Caco-2 (cell line): ENCODE measurements at regions of chr15 and their contacts with region 1.

Region 1: GRCh38 chr15:29925227-29926082 is 103.2 kb upstream of the TJP1 start:
- DNase-seq: peak; percentile 93 to 94
- H3K4me3 ChIP-seq: no peak overlapping the region
- H3K4me3 Mint-ChIP-seq: peak overlapping the region; percentile 68
- H3K27ac Mint-ChIP-seq: peak overlapping the region; percentile 87
- H3K4me1 ChIP-seq: peaks cover 57% of the 10 kb centered on the region
- H3K4me1 Mint-ChIP-seq: peaks cover 58% of the 10 kb centered on the region
- H3K27me3 ChIP-seq: no peaks in the 10 kb centered on the region
- H3K27me3 Mint-ChIP-seq: no peaks in the 10 kb centered on the region
- CTCF ChIP-seq: peak; percentile 86 to 95

Region 2: DNA sequence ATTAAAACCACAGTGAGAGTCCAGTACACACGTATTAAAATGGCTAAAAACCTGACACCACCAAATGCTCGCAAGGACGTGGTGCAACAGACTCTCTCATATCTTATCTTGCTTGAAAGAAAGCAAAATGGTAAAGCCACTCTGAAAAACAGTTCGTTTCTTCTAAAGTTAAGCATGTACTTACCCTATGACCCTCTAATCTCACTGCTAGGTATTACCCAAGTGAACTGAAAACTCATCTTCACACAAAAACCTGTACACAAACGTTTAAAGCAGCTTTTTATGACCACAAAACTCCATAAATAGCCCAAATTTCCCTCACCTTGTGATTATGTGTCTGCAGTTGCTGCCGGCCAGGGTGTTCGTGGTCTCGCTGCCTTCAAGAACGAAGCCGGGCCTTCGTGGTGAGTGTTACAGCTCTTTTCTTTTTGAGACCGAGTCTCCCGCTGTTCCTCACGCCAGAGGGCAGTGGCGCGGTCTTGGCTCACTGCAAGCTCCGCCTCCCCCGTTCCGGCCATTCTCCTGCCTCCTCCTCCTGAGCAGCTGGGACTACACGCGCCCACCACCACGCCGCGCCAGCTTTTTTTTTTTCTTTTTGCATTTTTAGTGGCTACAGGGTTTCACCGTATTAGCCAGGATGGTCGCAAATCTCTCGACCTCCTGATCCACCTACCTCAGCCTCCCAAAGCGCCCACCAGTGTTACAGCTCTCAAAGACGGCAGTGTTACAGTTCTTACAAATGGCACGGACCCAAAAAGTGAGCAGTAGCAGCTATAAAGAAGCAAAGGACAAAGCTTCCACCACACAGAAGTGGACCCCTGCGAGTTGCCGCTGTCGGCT is 268.6 kb before region 1 on chr15:
- CTCF ChIA-PET with region 1: interaction called, 12 read pairs
- POLR2A ChIA-PET with region 1: no interaction called
- intact Hi-C with region 1: no loop called
- DNase-seq: peak; percentile 78 to 80
- H3K4me3 ChIP-seq: peak overlapping the region; percentile 38
- H3K4me3 Mint-ChIP-seq: peak overlapping the region; percentile 76
- H3K27ac Mint-ChIP-seq: no peak overlapping the region
- H3K4me1 ChIP-seq: no peaks in the 10 kb centered on the region
- H3K4me1 Mint-ChIP-seq: no peaks in the 10 kb centered on the region
- H3K27me3 ChIP-seq: no peaks in the 10 kb centered on the region
- H3K27me3 Mint-ChIP-seq: peaks cover 3% of the 10 kb centered on the region
- CTCF ChIP-seq: peak; percentile 12 to 47

Region 3: DNA sequence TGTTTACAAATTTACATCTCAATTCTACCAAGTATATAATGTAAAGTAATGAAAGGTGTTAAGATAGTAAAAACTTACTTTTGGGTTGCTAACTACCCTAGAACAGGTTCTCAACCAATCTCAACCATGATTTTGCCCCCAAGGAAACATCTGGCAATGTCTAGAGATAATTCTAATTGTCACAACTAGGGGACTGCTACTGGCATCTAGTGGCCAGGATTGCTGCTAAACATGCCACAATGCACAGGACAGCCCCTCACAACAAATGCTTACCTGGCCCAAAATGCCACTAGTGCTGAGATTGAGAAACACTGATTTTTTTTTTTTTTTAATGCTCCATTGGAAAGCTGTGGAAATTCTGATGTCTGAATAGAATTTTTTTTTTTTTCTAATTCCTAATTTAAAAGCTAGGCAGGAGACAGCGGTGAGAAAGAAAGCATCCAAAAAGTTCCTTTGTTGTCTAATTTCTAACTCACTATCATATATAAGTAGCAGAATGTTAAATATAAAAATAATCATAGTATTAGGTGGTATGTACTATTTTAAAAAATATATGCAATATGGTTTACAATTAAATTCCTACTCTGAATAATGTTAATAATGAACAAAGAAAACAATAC is 184.7 kb before region 1 on chr15:
- CTCF ChIA-PET with region 1: interaction called, 17 read pairs
- POLR2A ChIA-PET with region 1: interaction called, 10 read pairs
- intact Hi-C with region 1: loop called (anchors 1 kb)
- DNase-seq: peak; percentile 42 to 44
- H3K4me3 ChIP-seq: no peak overlapping the region
- H3K4me3 Mint-ChIP-seq: no peak overlapping the region
- H3K27ac Mint-ChIP-seq: no peak overlapping the region
- H3K4me1 ChIP-seq: peaks cover 30% of the 10 kb centered on the region
- H3K4me1 Mint-ChIP-seq: peaks cover 23% of the 10 kb centered on the region
- H3K27me3 ChIP-seq: no peaks in the 10 kb centered on the region
- H3K27me3 Mint-ChIP-seq: no peaks in the 10 kb centered on the region
- CTCF ChIP-seq: peak in 1 of 2 experiments; percentile 60

Region 4: DNA sequence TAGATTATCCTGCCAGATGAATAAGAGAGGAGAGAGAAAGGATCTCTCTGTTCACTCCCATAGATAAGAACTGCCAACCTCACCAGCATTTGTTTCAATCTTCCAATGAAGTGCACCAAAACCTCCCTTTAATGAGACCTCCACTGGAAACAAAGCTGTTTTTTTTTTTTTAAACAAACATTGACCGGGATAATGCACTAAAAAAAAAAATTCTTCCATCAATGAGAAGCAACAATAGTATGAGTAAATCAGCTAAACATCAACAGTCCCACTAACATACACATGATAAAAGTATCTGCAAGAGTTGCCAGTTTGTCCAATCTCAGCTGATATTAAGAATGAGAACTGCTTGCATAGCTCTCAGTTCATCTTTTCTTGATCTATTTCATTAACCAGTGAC is 123.0 kb before region 1 on chr15:
- CTCF ChIA-PET with region 1: interaction called, 15 read pairs
- POLR2A ChIA-PET with region 1: no interaction called
- intact Hi-C with region 1: no loop called
- DNase-seq: no peak
- H3K4me3 ChIP-seq: no peak overlapping the region
- H3K4me3 Mint-ChIP-seq: no peak overlapping the region
- H3K27ac Mint-ChIP-seq: peak overlapping the region; percentile 51
- H3K4me1 ChIP-seq: peaks cover 45% of the 10 kb centered on the region
- H3K4me1 Mint-ChIP-seq: peaks cover 53% of the 10 kb centered on the region
- H3K27me3 ChIP-seq: no peaks in the 10 kb centered on the region
- H3K27me3 Mint-ChIP-seq: no peaks in the 10 kb centered on the region
- CTCF ChIP-seq: no peak

Region 5: DNA sequence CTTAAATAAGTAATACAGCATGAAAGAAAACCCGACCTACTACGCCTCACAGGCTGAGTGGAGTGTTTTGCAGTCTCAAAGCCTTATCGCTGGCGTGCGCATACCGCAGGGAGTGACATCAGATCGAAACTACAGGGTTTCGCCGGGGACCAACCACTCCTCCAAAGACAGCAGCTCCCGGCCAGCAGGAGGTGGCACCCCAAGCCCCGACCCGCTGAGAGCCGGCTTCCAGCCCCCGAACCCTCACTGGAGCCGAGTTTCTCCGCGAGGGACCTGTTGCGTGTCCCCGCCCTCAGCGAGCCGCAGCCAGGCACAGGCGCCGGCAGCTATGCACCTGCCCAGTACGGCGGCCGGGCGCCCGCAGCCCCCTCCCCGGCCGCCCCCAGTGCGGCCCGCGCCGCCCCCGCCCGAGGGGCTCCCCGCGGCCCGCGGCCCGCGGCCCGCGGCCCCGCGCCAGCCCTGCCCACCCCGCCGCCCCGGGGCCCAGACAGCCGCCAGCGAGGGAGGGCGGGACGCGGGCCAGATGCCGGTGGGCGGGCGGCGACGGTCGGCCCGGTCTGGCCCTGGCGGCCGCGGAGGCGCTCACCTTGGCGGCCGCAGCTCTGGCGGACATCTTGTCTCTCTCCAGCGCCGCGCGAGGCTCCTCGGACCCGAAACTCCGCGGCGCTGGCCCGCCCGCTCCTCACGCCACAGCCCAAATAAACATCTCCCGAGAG is 103.9 kb before region 1 on chr15:
- CTCF ChIA-PET with region 1: interaction called, 85 read pairs
- POLR2A ChIA-PET with region 1: interaction called, 133 read pairs
- intact Hi-C with region 1: loop called (anchors 1 kb)
- DNase-seq: peak; percentile 96 to 97
- H3K4me3 ChIP-seq: peak overlapping the region; percentile 80
- H3K4me3 Mint-ChIP-seq: peak overlapping the region; percentile 93
- H3K27ac Mint-ChIP-seq: peak overlapping the region; percentile 97
- H3K4me1 ChIP-seq: peaks cover 20% of the 10 kb centered on the region
- H3K4me1 Mint-ChIP-seq: peaks cover 15% of the 10 kb centered on the region
- H3K27me3 ChIP-seq: no peaks in the 10 kb centered on the region
- H3K27me3 Mint-ChIP-seq: no peaks in the 10 kb centered on the region
- CTCF ChIP-seq: peak in 1 of 2 experiments; percentile 31

Region 6: DNA sequence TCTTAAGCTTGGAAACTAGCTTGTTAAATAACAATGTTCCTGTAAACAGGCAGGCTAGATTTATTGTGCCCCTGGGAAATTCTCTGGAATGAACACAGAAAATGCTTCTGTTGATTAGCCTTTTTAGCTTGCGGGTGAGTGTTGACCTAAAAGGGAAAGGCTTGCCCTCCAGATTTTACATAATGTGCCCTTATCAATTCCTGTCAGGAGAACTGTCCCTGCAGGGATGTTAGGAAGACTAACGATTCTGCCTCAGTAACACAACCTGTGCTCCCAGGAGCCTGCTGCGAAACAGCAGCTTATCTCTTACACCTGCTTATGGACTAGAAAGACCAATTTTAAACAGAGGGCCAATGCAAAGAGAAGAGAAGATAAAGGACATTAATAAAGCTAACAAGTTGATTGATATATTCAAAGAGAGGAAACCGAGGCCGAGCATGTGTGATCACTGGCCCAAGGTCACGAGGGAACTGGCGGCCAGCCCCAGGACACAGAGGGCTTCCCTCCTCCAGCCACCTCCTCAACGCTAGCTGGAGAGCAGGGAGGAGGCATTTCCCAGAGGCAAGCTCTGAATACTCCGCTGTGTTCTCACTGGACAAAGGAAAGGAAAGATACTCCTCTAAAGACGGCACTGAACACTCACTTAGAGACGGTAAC is 54.8 kb before region 1 on chr15:
- CTCF ChIA-PET with region 1: interaction called, 13 read pairs
- POLR2A ChIA-PET with region 1: no interaction called
- intact Hi-C with region 1: loop called (anchors 2 kb)
- DNase-seq: peak; percentile 29 to 68
- H3K4me3 ChIP-seq: no peak overlapping the region
- H3K4me3 Mint-ChIP-seq: peak overlapping the region; percentile 23
- H3K27ac Mint-ChIP-seq: peak overlapping the region; percentile 48
- H3K4me1 ChIP-seq: peaks cover 14% of the 10 kb centered on the region
- H3K4me1 Mint-ChIP-seq: peaks cover 20% of the 10 kb centered on the region
- H3K27me3 ChIP-seq: no peaks in the 10 kb centered on the region
- H3K27me3 Mint-ChIP-seq: no peaks in the 10 kb centered on the region
- CTCF ChIP-seq: no peak

Region 7: DNA sequence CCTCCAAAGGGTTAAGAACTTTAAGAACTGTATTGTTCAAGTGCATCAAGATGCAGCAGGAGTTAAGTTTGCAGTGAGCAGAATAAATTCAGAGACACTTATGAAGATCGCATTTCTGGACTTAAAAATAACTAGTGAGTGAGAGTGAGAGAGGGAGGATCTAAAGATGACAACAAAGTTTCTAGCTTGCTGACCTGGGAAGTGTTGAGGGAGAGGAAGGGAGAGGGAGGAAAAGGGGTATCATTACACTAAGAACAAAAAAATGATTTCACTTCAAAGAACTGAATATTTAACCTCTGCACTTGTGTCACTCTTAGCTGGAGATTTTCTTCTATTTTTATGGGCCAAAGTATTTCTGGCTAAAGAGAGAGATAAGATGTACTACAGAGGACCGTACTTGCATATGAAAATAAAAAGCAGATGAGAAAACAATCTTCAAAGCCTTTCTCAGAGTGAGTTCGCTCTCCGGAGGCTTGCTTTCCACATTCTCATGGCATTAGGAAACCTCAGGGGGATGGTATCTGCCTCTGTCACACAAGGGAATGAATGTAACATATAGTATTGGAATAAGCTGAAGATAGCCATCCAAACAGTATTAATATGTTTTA is 11.8 kb before region 1 on chr15:
- CTCF ChIA-PET with region 1: interaction called, 29 read pairs
- POLR2A ChIA-PET with region 1: interaction called, 13 read pairs
- intact Hi-C with region 1: loop called (anchors 1 kb)
- DNase-seq: peak in 1 of 2 experiments; percentile 50
- H3K4me3 ChIP-seq: no peak overlapping the region
- H3K4me3 Mint-ChIP-seq: peak overlapping the region; percentile 65
- H3K27ac Mint-ChIP-seq: peak overlapping the region; percentile 72
- H3K4me1 ChIP-seq: peaks cover 33% of the 10 kb centered on the region
- H3K4me1 Mint-ChIP-seq: peaks cover 38% of the 10 kb centered on the region
- H3K27me3 ChIP-seq: no peaks in the 10 kb centered on the region
- H3K27me3 Mint-ChIP-seq: no peaks in the 10 kb centered on the region
- CTCF ChIP-seq: no peak

Region 8: GRCh38 chr15:29988689-29989088 is 63.2 kb after region 1 on chr15:
- CTCF ChIA-PET with region 1: no interaction called
- POLR2A ChIA-PET with region 1: no interaction called
- intact Hi-C with region 1: no loop called
- DNase-seq: no peak
- H3K4me3 ChIP-seq: no peak overlapping the region
- H3K4me3 Mint-ChIP-seq: no peak overlapping the region
- H3K27ac Mint-ChIP-seq: no peak overlapping the region
- H3K4me1 ChIP-seq: no peaks in the 10 kb centered on the region
- H3K4me1 Mint-ChIP-seq: peaks cover 12% of the 10 kb centered on the region
- H3K27me3 ChIP-seq: no peaks in the 10 kb centered on the region
- H3K27me3 Mint-ChIP-seq: peaks cover 6% of the 10 kb centered on the region
- CTCF ChIP-seq: no peak